ENCODE measurements at regions of chr2 and their contacts with region 1.

Region 1: DNA sequence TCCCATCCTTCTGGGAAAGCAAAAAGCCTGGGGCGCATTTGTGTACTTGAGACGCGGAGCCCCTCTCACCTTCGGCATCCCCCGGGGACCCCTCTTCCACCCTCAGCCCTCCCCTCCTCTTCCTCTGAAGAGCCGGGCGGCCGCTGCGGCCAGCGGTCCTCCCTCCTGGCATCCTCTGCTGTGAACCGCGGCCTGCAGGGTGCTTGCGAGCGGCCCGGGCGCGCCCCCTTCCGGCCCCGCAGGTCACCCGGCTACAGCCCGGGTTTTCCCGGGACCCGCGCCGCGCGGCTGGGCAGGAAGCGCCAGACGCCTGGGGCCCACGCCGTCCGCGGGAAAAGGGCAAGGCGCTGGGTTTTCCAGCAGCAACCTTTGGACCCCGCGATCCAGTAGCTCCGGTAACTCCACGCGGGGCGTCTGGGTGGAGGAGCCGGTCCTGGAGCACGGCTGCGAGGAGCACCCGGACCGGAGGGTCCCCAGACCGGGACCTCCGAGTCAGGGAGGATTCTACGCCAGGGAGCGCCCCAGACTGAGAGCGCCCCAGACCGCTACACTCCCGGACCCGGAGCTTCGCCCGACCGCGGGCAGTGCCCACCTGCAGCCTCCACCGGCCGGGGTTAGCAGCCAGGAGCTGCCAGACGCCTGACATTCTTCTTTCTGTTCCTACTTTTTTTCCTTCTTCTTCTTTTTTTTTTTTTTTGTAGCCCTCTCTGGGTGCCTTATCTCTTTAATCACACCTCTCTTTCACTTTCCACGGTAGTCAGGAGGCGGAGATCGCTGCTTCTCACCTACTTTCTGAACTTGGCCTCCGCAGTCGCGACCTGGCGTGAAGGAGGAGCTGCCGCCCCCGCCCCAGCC is at the start of gene IL18R1:
- H3K4me3 Mint-ChIP-seq: peak within 1 kb of the TSS; percentile 86
- H3K27ac Mint-ChIP-seq: peak within 1 kb of the TSS; percentile 68
- H3K4me1 Mint-ChIP-seq: peaks cover 35% of the 10 kb centered on the region
- H3K27me3 Mint-ChIP-seq: peaks cover 28% of the 10 kb centered on the region

Region 2: DNA sequence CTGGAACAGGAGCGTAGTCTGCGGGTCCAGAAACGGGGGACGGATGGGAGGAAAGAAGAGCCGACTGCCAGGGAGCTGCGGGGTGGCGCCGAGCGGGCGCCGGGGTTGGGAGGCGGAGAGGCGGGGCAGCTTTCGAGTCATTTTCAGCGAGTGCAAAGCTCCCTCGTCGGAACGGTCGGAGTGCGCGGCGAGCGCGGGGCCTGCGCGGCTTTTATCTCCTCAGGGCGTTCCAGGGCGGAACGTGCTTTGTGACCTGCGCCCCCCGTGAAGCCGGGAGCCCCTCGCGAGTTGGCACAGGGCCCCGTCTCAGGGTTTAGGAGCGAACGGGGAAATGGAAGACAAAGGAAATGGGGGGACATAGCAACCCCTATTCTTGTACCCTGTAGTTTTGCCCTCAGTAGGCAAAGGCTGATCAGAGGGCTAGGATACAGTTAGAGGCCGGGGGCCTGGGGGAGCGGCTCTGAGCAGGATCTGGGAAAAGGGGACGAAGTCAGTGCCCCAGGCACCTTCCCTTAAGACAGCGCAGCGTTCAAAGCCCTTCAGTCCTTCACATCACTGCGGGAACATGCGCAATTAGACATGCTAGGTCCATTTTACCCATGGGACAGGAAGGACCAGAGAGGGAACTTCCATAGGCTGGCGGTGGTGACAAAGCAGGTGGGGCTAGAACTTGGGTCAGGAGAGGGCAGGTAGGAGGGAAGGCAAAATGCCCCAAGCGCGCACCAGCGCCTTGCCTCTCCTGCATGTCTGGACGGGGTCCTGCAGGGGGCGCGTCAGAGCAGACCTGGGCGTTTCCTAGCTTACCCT is 104.5 kb before region 1 on chr2:
- intact Hi-C with region 1: loop called (anchors 2 kb)
- H3K4me3 Mint-ChIP-seq: peak overlapping the region; percentile 73
- H3K27ac Mint-ChIP-seq: peak overlapping the region; percentile 64
- H3K4me1 Mint-ChIP-seq: peaks cover 27% of the 10 kb centered on the region
- H3K27me3 Mint-ChIP-seq: peaks cover 49% of the 10 kb centered on the region

Region 3: DNA sequence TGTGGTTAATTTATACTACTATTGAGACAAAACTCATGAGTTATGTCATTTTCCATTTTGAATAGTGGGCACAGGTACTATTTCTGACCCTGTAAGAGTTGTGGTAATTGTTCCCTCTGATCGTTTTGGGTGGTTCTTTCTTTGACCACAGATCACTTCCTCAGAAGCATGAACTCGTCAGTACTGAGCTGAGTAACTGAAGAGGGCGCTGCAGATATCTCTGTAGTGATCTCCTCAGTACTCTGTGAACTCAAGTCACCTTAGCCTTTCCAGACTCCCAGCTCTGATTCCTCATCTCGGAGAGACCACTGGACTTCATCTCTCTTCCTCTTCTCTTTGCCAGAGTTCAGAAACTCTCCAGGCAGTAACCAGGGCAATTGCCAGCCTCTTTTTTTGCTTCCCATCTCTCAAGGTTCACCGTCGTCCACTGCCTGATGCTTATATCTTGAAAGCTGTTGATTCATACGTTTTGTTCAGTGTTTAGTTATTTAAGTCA is 53.8 kb before region 1 on chr2:
- intact Hi-C with region 1: loop called (anchors 2 kb)
- H3K4me3 Mint-ChIP-seq: no peak overlapping the region
- H3K27ac Mint-ChIP-seq: no peak overlapping the region
- H3K4me1 Mint-ChIP-seq: peaks cover 30% of the 10 kb centered on the region
- H3K27me3 Mint-ChIP-seq: peaks cover 57% of the 10 kb centered on the region

Region 4: DNA sequence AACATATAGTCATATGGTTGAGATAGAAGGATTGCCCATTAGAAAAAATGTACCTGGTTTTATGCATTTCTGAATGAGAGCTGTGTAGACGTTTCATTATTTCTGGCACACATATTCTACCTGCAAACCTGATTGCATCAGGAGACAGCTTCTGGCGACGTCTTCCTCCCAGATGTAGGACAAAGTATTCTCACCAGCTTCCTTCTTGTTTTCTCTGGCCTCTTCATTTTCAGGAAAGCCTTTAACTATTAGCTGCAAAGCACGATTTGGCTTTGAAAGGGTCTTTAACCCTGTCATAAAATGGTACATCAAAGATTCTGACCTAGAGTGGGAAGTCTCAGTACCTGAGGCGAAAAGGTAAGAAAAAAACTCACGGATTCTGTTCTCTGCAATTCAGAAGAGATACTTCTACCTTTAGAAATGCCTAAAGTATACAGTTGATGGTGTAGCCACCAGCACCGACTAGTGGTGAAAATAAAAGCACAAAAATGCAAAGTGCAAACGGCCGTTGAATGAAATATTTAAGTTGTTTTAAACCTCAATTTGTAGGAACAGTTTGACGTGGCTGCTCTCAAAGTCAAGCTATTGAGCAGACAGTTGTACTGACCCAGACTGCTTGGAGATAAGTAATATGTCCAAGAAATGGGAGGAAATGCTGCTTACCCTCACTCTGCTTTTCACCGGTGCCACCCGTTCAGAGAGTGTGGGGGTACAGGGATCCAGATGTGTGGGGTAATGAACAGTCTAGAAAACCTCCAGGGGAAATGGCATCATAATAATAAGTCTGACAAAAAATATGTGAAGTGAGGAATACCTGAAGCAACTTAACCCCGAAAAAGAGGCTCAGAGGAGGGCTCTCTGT is 87.4 kb after region 1 on chr2:
- intact Hi-C with region 1: loop called (anchors 2 kb)
- H3K4me3 Mint-ChIP-seq: no peak overlapping the region
- H3K27ac Mint-ChIP-seq: no peak overlapping the region
- H3K4me1 Mint-ChIP-seq: no peaks in the 10 kb centered on the region
- H3K27me3 Mint-ChIP-seq: peaks cover 6% of the 10 kb centered on the region

Region 5: DNA sequence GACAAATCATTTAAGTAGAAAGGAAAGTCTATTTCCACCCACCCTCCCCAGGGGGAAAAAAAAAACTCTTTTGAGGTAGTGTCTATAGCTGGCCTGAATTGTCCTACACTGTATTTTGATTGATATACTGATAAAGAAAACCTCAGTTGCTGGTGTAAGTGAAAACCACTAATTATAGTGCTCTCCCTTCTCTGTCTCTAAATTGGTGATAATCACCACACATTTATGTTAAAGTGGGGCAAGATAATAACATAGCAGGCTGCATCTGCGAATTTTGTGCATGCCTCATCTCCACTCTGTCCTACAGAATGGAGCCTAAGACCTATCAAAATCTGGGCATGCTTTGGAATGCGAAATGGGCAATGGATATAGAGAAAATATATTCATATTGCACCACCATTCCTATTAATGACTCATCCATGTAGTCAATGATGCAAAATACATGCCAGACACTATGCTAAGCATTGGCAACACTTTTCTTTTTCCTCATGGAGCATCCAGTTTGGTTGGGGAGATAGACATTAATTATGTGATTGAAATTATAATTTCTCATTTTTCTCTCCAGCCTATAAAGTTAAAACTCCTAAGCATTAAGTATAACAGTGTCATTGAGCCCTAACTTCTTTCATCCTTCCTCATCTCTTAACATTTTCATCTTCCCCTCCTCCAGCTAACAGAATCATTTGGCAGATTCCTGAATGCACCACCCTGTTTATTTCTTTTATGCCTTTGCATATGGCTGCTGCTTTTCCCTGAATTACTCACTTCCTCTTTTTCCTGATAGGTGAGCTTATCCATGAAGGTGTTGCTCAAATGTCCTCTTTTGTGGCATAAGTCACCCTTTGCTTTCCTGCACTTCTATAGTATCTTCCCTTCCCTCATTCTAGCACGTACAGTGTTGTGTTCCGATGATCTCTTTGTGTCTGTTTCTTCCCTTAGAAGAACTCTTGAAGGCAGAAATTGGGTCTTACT is 321.8 kb after region 1 on chr2:
- intact Hi-C with region 1: no loop called
- H3K4me3 Mint-ChIP-seq: no peak overlapping the region
- H3K27ac Mint-ChIP-seq: no peak overlapping the region
- H3K4me1 Mint-ChIP-seq: peaks cover under 1% of the 10 kb centered on the region
- H3K27me3 Mint-ChIP-seq: peaks cover 2% of the 10 kb centered on the region